Posterior vena cava (tissue), 2 donors: ENCODE measurements at regions of chrX and their contacts with region 1.

Region 1: GRCh38 chrX:129006491-129006890 is 516.8 kb downstream of the SMARCA1 start:
- DNase-seq: no peak

Region 2: GRCh38 chrX:129039180-129039579 is 32.7 kb after region 1 on chrX:
- intact Hi-C with region 1: loop called in 1 of 2 experiments (anchors 2 kb)
- DNase-seq: no peak

Region 3: GRCh38 chrX:130196466-130196865 is 1190.0 kb after region 1 on chrX:
- intact Hi-C with region 1: no loop called
- DNase-seq: no peak